Activated CD4-positive, alpha-beta T cell treated with anti-CD3 and anti-CD28 coated beads for 36 hours (primary cell): ENCODE measurements at regions of chr1 and their contacts with region 1.

Region 1: GRCh38 chr1:207321079-207321789 is at the start of gene CD55:
- DNase-seq: peak; percentile 99
- ATAC-seq: peak; percentile 93
- H3K4me3 Mint-ChIP-seq: peak within 1 kb of the TSS; percentile 95
- H3K27ac Mint-ChIP-seq: peak within 1 kb of the TSS; percentile 100
- H3K4me1 Mint-ChIP-seq: peaks cover 31% of the 10 kb centered on the region
- H3K27me3 Mint-ChIP-seq: no peaks in the 10 kb centered on the region
- total RNA-seq, gene CD55: 56.8 to 92.7 TPM

Region 2: GRCh38 chr1:206925106-206925736 is 396.0 kb before region 1 on chr1:
- CTCF ChIA-PET with region 1: no interaction called
- POLR2A ChIA-PET with region 1: no interaction called
- intact Hi-C with region 1: loop called in 1 of 2 experiments (anchors 10 kb)
- DNase-seq: peak; percentile 83
- ATAC-seq: peak; percentile 58
- H3K4me3 Mint-ChIP-seq: no peak overlapping the region
- H3K27ac Mint-ChIP-seq: no peak overlapping the region
- H3K4me1 Mint-ChIP-seq: peaks cover 28% of the 10 kb centered on the region
- H3K27me3 Mint-ChIP-seq: no peaks in the 10 kb centered on the region

Region 3: GRCh38 chr1:207097871-207098324 is 223.3 kb before region 1 on chr1:
- CTCF ChIA-PET with region 1: no interaction called
- POLR2A ChIA-PET with region 1: interaction called, 5 read pairs
- intact Hi-C with region 1: loop called (anchors 1 to 2 kb)
- DNase-seq: peak; percentile 69
- ATAC-seq: peak; percentile 99
- H3K4me3 Mint-ChIP-seq: no peak overlapping the region
- H3K27ac Mint-ChIP-seq: peak overlapping the region; percentile 79
- H3K4me1 Mint-ChIP-seq: peaks cover 14% of the 10 kb centered on the region
- H3K27me3 Mint-ChIP-seq: peaks cover 13% of the 10 kb centered on the region

Region 4: GRCh38 chr1:207362962-207363858 is 42.0 kb after region 1 on chr1:
- CTCF ChIA-PET with region 1: interaction called, 3 read pairs
- POLR2A ChIA-PET with region 1: interaction called, 11 read pairs
- intact Hi-C with region 1: loop called (anchors 1 kb)
- DNase-seq: peak; percentile 37
- ATAC-seq: peak; percentile 89
- H3K4me3 Mint-ChIP-seq: no peak overlapping the region
- H3K27ac Mint-ChIP-seq: no peak overlapping the region
- H3K4me1 Mint-ChIP-seq: peaks cover 2% of the 10 kb centered on the region
- H3K27me3 Mint-ChIP-seq: no peaks in the 10 kb centered on the region

Region 5: GRCh38 chr1:207404849-207405525 is 83.8 kb after region 1 on chr1:
- CTCF ChIA-PET with region 1: interaction called, 11 read pairs
- POLR2A ChIA-PET with region 1: interaction called, 5 read pairs
- intact Hi-C with region 1: loop called (anchors 1 to 2 kb)
- DNase-seq: no peak
- ATAC-seq: peak; percentile 78
- H3K4me3 Mint-ChIP-seq: no peak overlapping the region
- H3K27ac Mint-ChIP-seq: no peak overlapping the region
- H3K4me1 Mint-ChIP-seq: peaks cover 25% of the 10 kb centered on the region
- H3K27me3 Mint-ChIP-seq: no peaks in the 10 kb centered on the region

Region 6: GRCh38 chr1:207751790-207752455 is 430.7 kb after region 1 on chr1 and contains the start of gene CD46:
- CTCF ChIA-PET with region 1: no interaction called
- POLR2A ChIA-PET with region 1: no interaction called
- intact Hi-C with region 1: loop called in 1 of 2 experiments (anchors 1 kb)
- DNase-seq: peak; percentile 97
- ATAC-seq: peak; percentile 97
- H3K4me3 Mint-ChIP-seq: peak within 1 kb of the TSS; percentile 99
- H3K27ac Mint-ChIP-seq: peak within 1 kb of the TSS; percentile 97
- H3K4me1 Mint-ChIP-seq: peaks cover 62% of the 10 kb centered on the region
- H3K27me3 Mint-ChIP-seq: no peaks in the 10 kb centered on the region
- total RNA-seq, gene CD46: 92.2 to 92.7 TPM